ENCODE measurements at regions of chr11 and their contacts with region 1.

Region 1: GRCh38 chr11:76380967-76381719 is at the starts of genes GVQW3 and THAP12:
- DNase-seq: peak; percentile 88 to 99 (median 97)

Region 2: GRCh38 chr11:76207642-76208401 is 173.3 kb before region 1 on chr11:
- intact Hi-C with region 1: loop called (anchors 5 kb)
- DNase-seq: peak; percentile 25 to 91 (median 79)

Measured in head of caudate nucleus (tissue), 42 donors.